Caco-2 (cell line): ENCODE measurements at regions of chr6 and their contacts with region 1.

Region 1: DNA sequence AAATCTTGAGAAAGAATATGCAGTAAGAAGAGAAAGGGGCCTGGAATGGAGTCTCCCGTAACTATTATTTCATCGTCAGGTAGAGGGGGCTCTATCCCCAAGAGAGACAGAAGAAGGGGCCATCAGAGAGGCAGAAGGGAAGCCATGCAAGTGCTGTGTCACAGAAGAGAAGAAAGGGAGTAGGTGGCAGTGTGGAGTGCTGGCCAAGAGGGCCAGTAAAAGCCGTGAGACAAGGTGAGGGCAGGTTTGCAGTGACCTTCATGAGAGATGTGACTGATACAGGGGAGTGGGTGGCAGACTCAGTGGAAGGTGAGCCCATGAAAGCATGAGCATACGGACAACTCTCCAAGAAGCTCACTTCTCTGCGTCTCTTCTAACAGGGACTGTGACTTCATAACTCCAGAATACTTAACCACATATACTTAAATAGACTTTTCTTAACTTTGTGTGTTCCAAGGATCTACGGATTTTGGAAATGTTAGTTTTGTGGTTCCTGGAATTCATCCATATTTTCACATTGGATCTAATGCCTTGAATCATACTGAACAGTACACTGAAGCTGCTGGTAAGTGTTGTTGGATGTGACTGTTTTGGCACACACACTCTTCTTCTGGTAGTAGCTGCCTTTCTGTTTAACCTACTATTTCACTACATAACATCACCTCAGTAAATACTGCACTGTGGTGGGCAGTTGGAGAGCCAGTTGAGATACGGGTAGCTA is 15.6 kb downstream of the PM20D2 start:
- DNase-seq: peak in 1 of 2 experiments; percentile 8
- H3K4me3 ChIP-seq: no peak overlapping the region
- H3K4me3 Mint-ChIP-seq: no peak overlapping the region
- H3K27ac Mint-ChIP-seq: no peak overlapping the region
- H3K4me1 ChIP-seq: no peaks in the 10 kb centered on the region
- H3K4me1 Mint-ChIP-seq: no peaks in the 10 kb centered on the region
- H3K27me3 ChIP-seq: no peaks in the 10 kb centered on the region
- H3K27me3 Mint-ChIP-seq: no peaks in the 10 kb centered on the region
- CTCF ChIP-seq: no peak

Region 2: DNA sequence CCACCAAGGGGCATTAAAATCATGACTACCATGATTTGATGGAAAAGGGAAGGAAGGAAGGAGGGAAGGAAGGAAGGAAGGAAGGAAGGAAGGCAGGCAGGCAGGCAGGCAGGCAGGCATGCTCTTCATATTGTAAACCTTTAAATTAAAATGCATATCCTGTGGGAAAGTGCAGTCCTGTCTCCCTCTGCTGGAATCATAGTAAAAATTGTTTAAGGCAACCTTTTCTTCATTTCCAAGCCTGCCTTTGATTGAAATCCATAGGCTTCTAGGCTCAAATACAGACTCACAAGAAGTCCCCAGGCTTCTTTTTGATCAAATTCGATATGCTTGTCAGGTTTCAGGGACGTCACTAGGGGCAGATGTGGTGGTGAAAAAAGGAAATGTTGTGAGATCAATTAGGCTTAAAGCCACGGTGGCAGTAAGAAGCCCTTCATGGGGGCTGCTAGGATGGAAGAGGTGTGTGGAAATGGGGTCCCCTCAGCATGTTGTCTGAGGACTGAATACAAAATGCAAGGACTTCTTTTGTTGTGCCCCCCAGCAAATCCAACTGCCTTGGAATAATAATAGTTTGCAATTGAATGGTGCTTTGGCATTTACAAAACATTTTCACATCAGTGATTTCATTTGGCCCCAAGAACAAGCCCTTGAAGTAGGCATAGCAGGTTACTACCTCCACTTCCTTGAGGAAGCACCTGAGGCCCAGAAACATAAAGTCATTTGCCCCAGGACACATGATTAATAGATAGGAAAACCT is 81.3 kb after region 1 on chr6:
- CTCF ChIA-PET with region 1: no interaction called
- POLR2A ChIA-PET with region 1: no interaction called
- intact Hi-C with region 1: loop called (anchors 1 kb)
- DNase-seq: peak in 1 of 2 experiments; percentile 35
- H3K4me3 ChIP-seq: no peak overlapping the region
- H3K4me3 Mint-ChIP-seq: no peak overlapping the region
- H3K27ac Mint-ChIP-seq: no peak overlapping the region
- H3K4me1 ChIP-seq: no peaks in the 10 kb centered on the region
- H3K4me1 Mint-ChIP-seq: no peaks in the 10 kb centered on the region
- H3K27me3 ChIP-seq: no peaks in the 10 kb centered on the region
- H3K27me3 Mint-ChIP-seq: peaks cover 6% of the 10 kb centered on the region
- CTCF ChIP-seq: peak; percentile 46 to 64